Activated naive CD4-positive, alpha-beta T cell treated with anti-CD3 and anti-CD28 coated beads for 36 hours (primary cell): ENCODE measurements at regions of chr16 and their contacts with region 1.

Region 1: GRCh38 chr16:2882460-2883026 is 472 bp upstream of the FLYWCH2 start:
- DNase-seq: peak; percentile 98
- H3K4me3 Mint-ChIP-seq: peak overlapping the region; percentile 89
- H3K27ac Mint-ChIP-seq: peak overlapping the region; percentile 91
- H3K4me1 Mint-ChIP-seq: peaks cover 14% of the 10 kb centered on the region
- H3K27me3 Mint-ChIP-seq: no peaks in the 10 kb centered on the region

Region 2: GRCh38 chr16:2155091-2156021 is 727.2 kb before region 1 on chr16 and contains the start of gene TRAF7:
- CTCF ChIA-PET with region 1: no interaction called
- intact Hi-C with region 1: no loop called
- DNase-seq: peak; percentile 99
- H3K4me3 Mint-ChIP-seq: peak within 1 kb of the TSS; percentile 97
- H3K27ac Mint-ChIP-seq: peak within 1 kb of the TSS; percentile 91
- H3K4me1 Mint-ChIP-seq: peaks cover 41% of the 10 kb centered on the region
- H3K27me3 Mint-ChIP-seq: no peaks in the 10 kb centered on the region
- total RNA-seq, gene TRAF7: 102 to 104 TPM

Region 3: GRCh38 chr16:2845116-2845515 is 37.4 kb before region 1 on chr16:
- CTCF ChIA-PET with region 1: no interaction called
- intact Hi-C with region 1: no loop called
- DNase-seq: no peak
- H3K4me3 Mint-ChIP-seq: no peak overlapping the region
- H3K27ac Mint-ChIP-seq: no peak overlapping the region
- H3K4me1 Mint-ChIP-seq: peaks cover 29% of the 10 kb centered on the region
- H3K27me3 Mint-ChIP-seq: peaks cover 7% of the 10 kb centered on the region

Region 4: GRCh38 chr16:2911580-2912329 is 29.2 kb after region 1 on chr16 and contains the start of gene FLYWCH1:
- CTCF ChIA-PET with region 1: interaction called, 7 read pairs
- intact Hi-C with region 1: loop called (anchors 1 kb)
- DNase-seq: peak; percentile 100
- H3K4me3 Mint-ChIP-seq: peak within 1 kb of the TSS; percentile 88
- H3K27ac Mint-ChIP-seq: peak within 1 kb of the TSS; percentile 79
- H3K4me1 Mint-ChIP-seq: peaks cover 27% of the 10 kb centered on the region
- H3K27me3 Mint-ChIP-seq: no peaks in the 10 kb centered on the region
- total RNA-seq, gene FLYWCH1: 33.5 to 35.4 TPM